ENCODE measurements at regions of chr17 and their contacts with region 1.

Region 1: DNA sequence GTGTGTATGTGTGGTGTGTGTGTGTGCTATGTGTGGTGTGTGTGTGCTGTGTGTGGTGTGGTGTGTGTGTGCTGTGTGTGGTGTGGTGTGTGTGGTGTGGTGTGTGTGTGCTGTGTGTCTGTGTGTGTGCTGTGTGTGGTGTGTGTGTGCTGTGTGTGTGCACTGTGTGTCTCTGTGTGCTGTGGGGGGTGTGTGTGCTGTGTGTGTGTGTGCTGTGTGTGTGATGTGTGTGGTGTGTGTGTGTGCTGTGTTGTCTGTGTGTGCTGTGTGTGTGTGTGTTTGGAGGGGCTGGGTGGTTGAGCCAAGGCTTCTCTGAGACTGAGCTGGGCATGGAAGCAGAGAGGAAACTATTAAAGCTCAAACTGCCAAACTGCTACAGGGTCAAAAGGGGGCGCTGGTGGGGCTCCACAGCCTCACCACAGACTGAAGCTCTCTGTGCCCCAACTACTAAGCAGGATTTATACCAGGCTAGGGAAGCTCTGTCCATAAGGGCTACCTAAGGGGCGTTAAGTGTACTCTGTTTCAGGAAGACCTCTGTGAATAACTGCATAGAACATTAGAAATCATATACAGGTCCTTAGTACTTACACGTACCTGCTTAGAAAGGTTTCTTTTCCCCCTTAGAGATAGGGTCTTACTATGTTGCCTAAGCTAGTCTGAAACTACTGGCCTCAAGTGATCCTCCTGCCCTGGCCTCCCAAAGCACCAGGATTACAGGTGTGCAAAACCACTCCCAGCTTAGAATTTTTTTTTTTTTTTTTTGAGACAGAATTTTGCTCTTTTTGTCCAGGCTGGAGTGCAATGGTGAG is 27.8 kb upstream of the GHDC start:
- DNase-seq: no peak
- H3K4me3 ChIP-seq: no peak overlapping the region
- CTCF ChIP-seq: peak; percentile 71

Region 2: DNA sequence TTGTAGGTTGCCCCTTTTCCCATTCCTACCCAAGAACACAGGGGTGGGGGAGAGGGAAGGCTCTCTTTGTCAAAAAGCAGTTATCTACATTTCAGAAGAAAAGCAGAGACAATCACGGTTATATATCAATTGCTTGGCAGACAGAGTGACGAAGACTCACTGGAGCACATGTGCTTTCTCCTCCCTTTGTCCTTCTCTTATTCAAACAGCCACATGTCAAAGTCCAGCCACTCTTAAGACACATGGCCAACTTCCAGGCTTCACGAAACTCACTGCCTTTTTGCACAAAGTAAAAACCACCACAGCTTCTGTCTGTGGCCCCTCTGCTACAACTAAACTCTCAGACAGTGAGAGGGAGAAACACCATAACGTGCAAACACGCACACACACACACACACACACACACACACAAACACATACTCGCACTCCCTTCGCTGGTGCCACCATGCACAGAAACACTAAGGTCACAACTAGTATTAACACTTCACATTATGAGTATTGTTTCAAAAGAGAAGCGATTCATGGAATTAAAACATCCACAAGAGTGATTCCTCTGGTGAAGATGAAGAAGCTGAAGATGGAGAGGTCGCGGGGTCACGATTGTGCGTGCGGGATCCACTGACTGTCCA is 20.9 kb before region 1 on chr17:
- CTCF ChIA-PET with region 1: interaction called, 10 read pairs
- POLR2A ChIA-PET with region 1: no interaction called
- DNase-seq: no peak
- H3K4me3 ChIP-seq: no peak overlapping the region
- CTCF ChIP-seq: no peak

Region 3: DNA sequence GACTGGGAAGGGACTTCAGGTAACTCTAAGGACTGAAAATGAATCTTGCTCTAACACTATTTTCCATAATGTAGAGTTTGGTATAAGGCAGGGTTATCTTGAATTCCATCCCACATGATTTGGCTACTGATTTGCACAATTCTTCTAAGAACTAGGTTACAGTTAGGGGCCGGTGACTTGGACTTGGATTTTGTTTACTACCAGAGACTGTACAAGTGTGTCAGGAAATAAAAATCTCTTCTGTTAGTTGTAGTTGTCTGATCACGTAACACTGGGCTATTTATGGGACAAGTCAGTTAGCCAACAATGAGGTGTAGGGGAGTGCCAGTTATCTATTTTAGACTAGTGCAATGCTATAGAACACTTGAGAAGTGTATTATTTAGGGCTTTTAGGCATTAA is 11.8 kb after region 1 on chr17:
- CTCF ChIA-PET with region 1: interaction called, 14 read pairs
- POLR2A ChIA-PET with region 1: no interaction called
- DNase-seq: no peak
- H3K4me3 ChIP-seq: no peak overlapping the region
- CTCF ChIP-seq: no peak

Region 4: GRCh38 chr17:42248351-42249179 is 26.4 kb after region 1 on chr17:
- CTCF ChIA-PET with region 1: interaction called, 17 read pairs
- POLR2A ChIA-PET with region 1: no interaction called
- DNase-seq: no peak
- H3K4me3 ChIP-seq: no peak overlapping the region
- CTCF ChIP-seq: no peak

Region 5: GRCh38 chr17:42312285-42313130 is 90.4 kb after region 1 on chr17:
- CTCF ChIA-PET with region 1: interaction called, 24 read pairs
- POLR2A ChIA-PET with region 1: no interaction called
- DNase-seq: no peak
- H3K4me3 ChIP-seq: no peak overlapping the region
- CTCF ChIP-seq: peak; percentile 89

Measured in AG04449 (cell line).